ENCODE measurements at regions of chr9 and their contacts with region 1.

Region 1: DNA sequence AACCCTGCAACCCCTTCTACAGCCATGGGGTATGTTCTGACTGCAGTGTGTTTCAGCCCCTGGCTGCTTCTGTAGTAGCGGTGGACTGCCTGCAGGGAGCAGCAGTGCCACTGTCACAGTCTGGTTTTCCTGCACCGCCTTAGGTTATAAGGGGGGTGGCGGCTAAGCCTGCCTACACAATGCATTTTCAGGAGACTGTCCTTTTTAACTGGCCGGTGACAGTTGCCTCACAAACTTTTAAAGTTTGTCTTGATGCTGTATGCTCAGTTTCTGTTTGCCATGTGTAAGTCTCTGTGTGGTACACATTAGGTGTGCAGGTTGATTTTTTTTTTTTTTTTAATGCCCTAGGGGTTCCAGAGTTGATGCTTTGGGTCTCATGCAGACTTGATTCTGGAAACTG is 53.0 kb downstream of the NUP214 start:
- DNase-seq: peak; percentile 86
- ATAC-seq: peak; percentile 99
- H3K4me3 Mint-ChIP-seq: no peak overlapping the region
- H3K27ac Mint-ChIP-seq: peak overlapping the region; percentile 69
- H3K4me1 Mint-ChIP-seq: peaks cover 20% of the 10 kb centered on the region
- H3K27me3 Mint-ChIP-seq: no peaks in the 10 kb centered on the region

Region 2: GRCh38 chr9:131270171-131271015 is 92.0 kb after region 1 on chr9:
- CTCF ChIA-PET with region 1: interaction called, 16 read pairs
- DNase-seq: peak; percentile 75
- ATAC-seq: peak; percentile 20
- H3K4me3 Mint-ChIP-seq: peak overlapping the region; percentile 99
- H3K27ac Mint-ChIP-seq: peak overlapping the region; percentile 92
- H3K4me1 Mint-ChIP-seq: peaks cover 57% of the 10 kb centered on the region
- H3K27me3 Mint-ChIP-seq: no peaks in the 10 kb centered on the region

Measured in activated CD8-positive, alpha-beta memory T cell treated with anti-CD3 and anti-CD28 coated beads, Interleukin-2, amount 10 ng/mL, durations not matched to agents 7 days and 5 days (primary cell).